GM12878 (cell line): ENCODE measurements at regions of chr10 and their contacts with region 1.

Region 1: DNA sequence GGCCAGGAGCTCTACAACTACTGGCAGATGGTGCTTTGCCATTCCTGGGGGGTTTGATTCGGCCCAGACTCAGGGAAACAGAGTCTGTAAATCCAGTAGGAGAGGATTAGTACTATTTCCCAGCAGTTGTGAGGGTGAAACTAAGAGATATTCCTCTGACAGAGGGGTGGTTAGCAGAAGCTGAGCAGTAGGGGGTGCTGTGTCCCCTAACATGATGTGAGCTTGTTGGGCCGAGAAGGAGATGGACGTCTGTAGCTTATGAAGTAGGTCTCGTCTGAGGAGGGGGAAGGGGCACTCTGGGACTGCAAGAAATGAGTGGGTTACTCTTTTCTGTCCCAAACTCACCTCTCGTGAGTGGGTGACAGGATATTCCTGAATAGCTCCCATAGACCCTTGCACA is 179.2 kb upstream of the MBL2 start:
- DNase-seq: no peak
- ATAC-seq: peak; percentile 98
- H3K4me3 ChIP-seq: no peak overlapping the region
- H3K27ac ChIP-seq: no peak overlapping the region
- H3K4me1 ChIP-seq: no peaks in the 10 kb centered on the region
- H3K27me3 ChIP-seq: no peaks in the 10 kb centered on the region
- CTCF ChIP-seq: peak; percentile 70 to 75 (median 70)
- EP300 ChIP-seq: no peak
- POLR2A ChIP-seq: no peak
- RAD21 ChIP-seq: peak; percentile 88

Region 2: DNA sequence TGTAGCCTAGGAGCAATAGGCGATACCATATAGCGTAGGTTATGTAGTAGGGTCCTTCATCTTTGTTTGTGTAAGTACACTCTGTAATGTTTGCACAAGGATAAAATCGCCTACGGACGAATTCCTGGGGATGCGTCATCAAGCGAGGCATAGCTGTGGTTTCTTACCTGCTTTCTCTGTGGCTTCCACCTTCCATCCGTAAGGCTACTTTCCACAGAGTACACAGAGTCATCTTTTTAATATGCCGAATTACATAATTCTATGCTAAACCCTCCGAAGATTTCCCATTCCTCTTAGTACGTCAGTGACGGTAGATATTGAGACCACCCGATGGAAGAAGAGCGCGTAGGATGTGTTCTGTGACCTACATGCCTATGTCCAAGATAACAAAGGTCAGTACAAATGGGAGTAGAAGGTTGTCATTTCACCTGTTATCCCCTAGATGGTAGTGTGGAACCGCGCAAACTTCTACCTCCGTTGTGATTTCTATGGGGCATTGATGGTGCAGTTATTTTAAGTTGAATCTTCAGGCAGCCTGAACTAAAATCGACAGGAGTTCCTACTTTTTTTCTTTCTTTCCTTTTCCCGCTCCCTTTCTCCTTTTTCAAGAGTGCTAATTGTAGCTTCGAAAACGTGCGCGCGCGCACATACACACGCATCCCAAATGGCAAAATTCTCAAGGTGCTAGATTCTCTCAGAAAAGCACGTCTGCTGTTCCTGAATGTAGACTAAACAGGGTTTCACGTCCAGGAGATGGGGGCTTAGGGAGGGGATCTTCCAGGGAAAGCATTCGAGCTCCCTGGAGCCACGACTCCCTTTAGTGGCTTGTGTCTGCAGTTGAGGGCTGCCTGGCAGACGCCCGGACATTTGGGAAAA is 67.6 kb before region 1 on chr10:
- CTCF ChIA-PET with region 1: interaction called, 3 read pairs
- POLR2A ChIA-PET with region 1: no interaction called
- RAD21 ChIA-PET with region 1: interaction called, 4 read pairs
- SMC1A ChIA-PET with region 1: interaction called, 3 read pairs
- in situ Hi-C with region 1: no loop called
- intact Hi-C with region 1: loop called (anchors 1 kb)
- DNase-seq: peak; percentile 25
- ATAC-seq: peak; percentile 95
- H3K4me3 ChIP-seq: no peak overlapping the region
- H3K27ac ChIP-seq: no peak overlapping the region
- H3K4me1 ChIP-seq: no peaks in the 10 kb centered on the region
- H3K27me3 ChIP-seq: no peaks in the 10 kb centered on the region; a peak in 1 of 4 replicates
- CTCF ChIP-seq: peak; percentile 78 to 84 (median 83)
- EP300 ChIP-seq: no peak
- POLR2A ChIP-seq: no peak
- RAD21 ChIP-seq: peak; percentile 90

Region 3: GRCh38 chr10:52918714-52919305 is 33.0 kb before region 1 on chr10:
- CTCF ChIA-PET with region 1: no interaction called
- POLR2A ChIA-PET with region 1: no interaction called
- RAD21 ChIA-PET with region 1: no interaction called
- SMC1A ChIA-PET with region 1: no interaction called
- in situ Hi-C with region 1: no loop called
- intact Hi-C with region 1: no loop called
- DNase-seq: no peak
- ATAC-seq: no peak
- H3K4me3 ChIP-seq: no peak overlapping the region
- H3K27ac ChIP-seq: no peak overlapping the region
- H3K4me1 ChIP-seq: no peaks in the 10 kb centered on the region
- H3K27me3 ChIP-seq: no peaks in the 10 kb centered on the region; a peak in 1 of 4 replicates
- CTCF ChIP-seq: no peak
- EP300 ChIP-seq: no peak
- POLR2A ChIP-seq: no peak
- RAD21 ChIP-seq: no peak

Region 4: GRCh38 chr10:53135213-53135896 is 183.5 kb after region 1 on chr10:
- CTCF ChIA-PET with region 1: interaction called, 10 read pairs
- POLR2A ChIA-PET with region 1: no interaction called
- RAD21 ChIA-PET with region 1: interaction called, 5 read pairs
- SMC1A ChIA-PET with region 1: interaction called, 3 read pairs
- in situ Hi-C with region 1: no loop called
- intact Hi-C with region 1: no loop called
- DNase-seq: no peak
- ATAC-seq: peak; percentile 87
- H3K4me3 ChIP-seq: no peak overlapping the region
- H3K27ac ChIP-seq: no peak overlapping the region
- H3K4me1 ChIP-seq: no peaks in the 10 kb centered on the region
- H3K27me3 ChIP-seq: no peaks in the 10 kb centered on the region; a peak in 1 of 4 replicates
- CTCF ChIP-seq: no peak
- EP300 ChIP-seq: no peak
- POLR2A ChIP-seq: no peak
- RAD21 ChIP-seq: no peak

Region 5: GRCh38 chr10:53209944-53210611 is 258.3 kb after region 1 on chr10:
- CTCF ChIA-PET with region 1: interaction called, 24 read pairs
- POLR2A ChIA-PET with region 1: no interaction called
- RAD21 ChIA-PET with region 1: interaction called, 7 read pairs
- SMC1A ChIA-PET with region 1: interaction called, 5 read pairs
- in situ Hi-C with region 1: no loop called
- intact Hi-C with region 1: loop called (anchors 5 kb)
- DNase-seq: no peak
- ATAC-seq: peak; percentile 65
- H3K4me3 ChIP-seq: no peak overlapping the region
- H3K27ac ChIP-seq: no peak overlapping the region
- H3K4me1 ChIP-seq: no peaks in the 10 kb centered on the region
- H3K27me3 ChIP-seq: no peaks in the 10 kb centered on the region
- CTCF ChIP-seq: peak in 1 of 3 experiments; percentile 42; a peak in 1 of 6 replicates
- EP300 ChIP-seq: no peak
- POLR2A ChIP-seq: no peak
- RAD21 ChIP-seq: no peak

Region 6: GRCh38 chr10:53601260-53601875 is 649.5 kb after region 1 on chr10:
- CTCF ChIA-PET with region 1: interaction called, 8 read pairs
- POLR2A ChIA-PET with region 1: no interaction called
- RAD21 ChIA-PET with region 1: interaction called, 6 read pairs
- SMC1A ChIA-PET with region 1: interaction called, 7 read pairs
- in situ Hi-C with region 1: no loop called
- intact Hi-C with region 1: loop called (anchors 2 kb)
- DNase-seq: no peak
- ATAC-seq: peak; percentile 79
- H3K4me3 ChIP-seq: no peak overlapping the region
- H3K27ac ChIP-seq: no peak overlapping the region
- H3K4me1 ChIP-seq: no peaks in the 10 kb centered on the region
- H3K27me3 ChIP-seq: no peaks in the 10 kb centered on the region
- CTCF ChIP-seq: peak; percentile 77 to 84 (median 78)
- EP300 ChIP-seq: no peak
- POLR2A ChIP-seq: no peak
- RAD21 ChIP-seq: peak; percentile 73